ENCODE measurements at regions of chr3 and their contacts with region 1.

Region 1: DNA sequence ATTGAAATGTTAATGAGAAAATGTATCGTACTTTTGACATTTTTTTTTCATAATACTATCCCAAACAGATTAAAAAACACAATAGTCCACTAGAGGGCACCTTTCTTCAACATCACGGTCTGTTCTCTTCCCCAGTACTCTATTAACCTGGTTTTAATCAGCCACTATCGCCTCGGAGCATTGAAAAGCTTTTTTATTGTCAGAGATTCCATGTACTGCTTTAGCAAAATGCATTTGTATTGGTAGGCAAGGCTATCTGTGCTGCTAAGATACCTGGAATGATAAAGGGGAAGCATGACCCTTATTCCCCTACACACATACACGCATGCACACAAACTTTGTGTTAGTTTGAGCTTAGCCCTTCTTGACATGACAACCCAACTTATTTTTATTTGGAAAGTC is 160.1 kb upstream of the IL12A start:
- DNase-seq: no peak
- H3K4me3 ChIP-seq: no peak overlapping the region
- H3K27ac ChIP-seq: peak overlapping the region; percentile 34 to 70 (median 60)
- H3K4me1 ChIP-seq: peaks cover 0 to 70% (median 46%) of the 10 kb centered on the region in 4 donors
- H3K27me3 ChIP-seq: no peaks in the 10 kb centered on the region
- CTCF ChIP-seq: peak; percentile 47 to 52 (median 50)
- EP300 ChIP-seq: no peak
- POLR2A ChIP-seq: no peak

Region 2: GRCh38 chr3:159260049-159260662 is 568.4 kb before region 1 on chr3:
- intact Hi-C with region 1: loop called (anchors 5 kb)
- DNase-seq: no peak
- H3K4me3 ChIP-seq: no peak overlapping the region
- H3K27ac ChIP-seq: no peak overlapping the region
- H3K4me1 ChIP-seq: no peaks in the 10 kb centered on the region
- H3K27me3 ChIP-seq: no peaks in the 10 kb centered on the region
- CTCF ChIP-seq: peak; percentile 11 to 68 (median 54)
- EP300 ChIP-seq: no peak
- POLR2A ChIP-seq: no peak

Region 3: GRCh38 chr3:159884661-159885402 is 56.3 kb after region 1 on chr3:
- intact Hi-C with region 1: loop called (anchors 2 kb)
- DNase-seq: no peak
- H3K4me3 ChIP-seq: no peak overlapping the region
- H3K27ac ChIP-seq: peak overlapping the region in 2 of 4 donors; percentile 56 to 67
- H3K4me1 ChIP-seq: peaks cover 0 to 75% (median 66%) of the 10 kb centered on the region in 4 donors
- H3K27me3 ChIP-seq: no peaks in the 10 kb centered on the region
- CTCF ChIP-seq: peak; percentile 24 to 49 (median 40)
- EP300 ChIP-seq: no peak
- POLR2A ChIP-seq: no peak

Region 4: DNA sequence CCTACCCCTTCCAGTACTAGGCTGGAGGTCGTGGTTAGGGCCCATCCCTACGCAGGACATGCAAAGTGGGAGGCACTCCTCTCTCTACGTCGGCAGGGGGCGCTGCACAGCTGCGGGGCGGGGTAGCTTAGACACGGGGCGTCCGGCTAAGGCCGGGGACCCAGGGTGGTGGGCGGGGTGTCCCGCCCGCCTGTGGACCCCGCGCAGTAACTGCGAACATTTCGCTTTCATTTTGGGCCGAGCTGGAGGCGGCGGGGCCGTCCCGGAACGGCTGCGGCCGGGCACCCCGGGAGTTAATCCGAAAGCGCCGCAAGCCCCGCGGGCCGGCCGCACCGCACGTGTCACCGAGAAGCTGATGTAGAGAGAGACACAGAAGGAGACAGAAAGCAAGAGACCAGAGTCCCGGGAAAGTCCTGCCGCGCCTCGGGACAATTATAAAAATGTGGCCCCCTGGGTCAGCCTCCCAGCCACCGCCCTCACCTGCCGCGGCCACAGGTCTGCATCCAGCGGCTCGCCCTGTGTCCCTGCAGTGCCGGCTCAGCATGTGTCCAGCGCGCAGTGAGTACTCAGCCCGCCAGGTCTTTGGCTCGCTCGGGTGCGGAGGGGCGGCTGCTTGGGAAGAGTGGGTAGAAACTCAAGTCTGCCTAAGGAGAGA is 160.2 kb after region 1 on chr3 and contains the start of gene IL12A:
- intact Hi-C with region 1: loop called (anchors 5 kb)
- DNase-seq: peak; percentile 89
- H3K4me3 ChIP-seq: peak within 1 kb of the TSS; percentile 54 to 90 (median 82)
- H3K27ac ChIP-seq: peak within 1 kb of the TSS; percentile 10 to 72 (median 32)
- H3K4me1 ChIP-seq: peaks cover 0 to 39% (median 25%) of the 10 kb centered on the region in 4 donors
- H3K27me3 ChIP-seq: no peaks in the 10 kb centered on the region
- CTCF ChIP-seq: peak; percentile 73 to 94 (median 81)
- EP300 ChIP-seq: no peak
- POLR2A ChIP-seq: no peak
- total RNA-seq, gene IL12A: 0.27 to 3.9 (median 1.3) TPM